Activated CD4-positive, alpha-beta T cell treated with anti-CD3 and anti-CD28 coated beads for 36 hours (primary cell): ENCODE measurements at regions of chr5 and their contacts with region 1.

Region 1: GRCh38 chr5:54243473-54244080 is 66.8 kb downstream of the ARL15 start:
- DNase-seq: peak; percentile 53
- ATAC-seq: no peak
- H3K4me3 Mint-ChIP-seq: no peak overlapping the region
- H3K27ac Mint-ChIP-seq: no peak overlapping the region
- H3K4me1 Mint-ChIP-seq: peaks cover 4% of the 10 kb centered on the region
- H3K27me3 Mint-ChIP-seq: no peaks in the 10 kb centered on the region

Region 2: GRCh38 chr5:54217826-54218503 is 25.6 kb before region 1 on chr5:
- CTCF ChIA-PET with region 1: no interaction called
- POLR2A ChIA-PET with region 1: no interaction called
- intact Hi-C with region 1: no loop called
- DNase-seq: peak; percentile 12
- ATAC-seq: no peak
- H3K4me3 Mint-ChIP-seq: no peak overlapping the region
- H3K27ac Mint-ChIP-seq: no peak overlapping the region
- H3K4me1 Mint-ChIP-seq: peaks cover 7% of the 10 kb centered on the region
- H3K27me3 Mint-ChIP-seq: no peaks in the 10 kb centered on the region

Region 3: DNA sequence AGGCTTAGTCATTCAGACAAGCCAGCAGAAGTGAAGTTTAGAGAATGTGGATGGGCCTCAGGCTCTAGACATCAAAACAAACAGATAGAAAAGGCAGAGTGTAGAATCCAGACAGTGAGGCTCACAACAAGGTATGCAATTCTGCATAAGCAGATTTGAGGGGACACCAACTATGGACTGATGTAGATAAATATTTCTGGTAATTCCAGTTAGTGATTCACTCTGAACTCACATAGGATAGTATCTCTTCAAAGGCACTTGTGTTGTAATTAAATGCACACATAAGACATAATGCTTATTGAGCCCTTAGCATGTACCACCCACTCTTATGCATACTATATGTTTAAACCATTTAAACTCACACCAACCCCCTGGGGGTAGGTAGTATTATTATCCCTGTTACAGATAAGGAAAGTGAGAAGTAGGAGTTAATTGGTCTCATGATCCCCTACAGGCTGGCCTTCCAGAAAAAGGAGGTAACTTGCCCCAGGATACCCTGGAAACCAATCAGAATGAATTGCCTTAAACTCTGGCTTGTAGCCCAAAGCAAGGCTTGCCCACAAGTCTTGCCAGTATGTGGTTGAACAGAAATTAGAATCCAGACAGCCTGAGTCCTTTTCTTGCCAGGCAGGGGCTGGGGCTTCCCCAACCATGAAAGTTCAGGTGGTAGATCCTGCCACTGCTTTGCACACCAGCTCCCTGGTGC is 172.5 kb after region 1 on chr5:
- CTCF ChIA-PET with region 1: interaction called, 18 read pairs
- POLR2A ChIA-PET with region 1: no interaction called
- intact Hi-C with region 1: loop called (anchors 1 to 2 kb)
- DNase-seq: no peak
- ATAC-seq: no peak
- H3K4me3 Mint-ChIP-seq: no peak overlapping the region
- H3K27ac Mint-ChIP-seq: no peak overlapping the region
- H3K4me1 Mint-ChIP-seq: no peaks in the 10 kb centered on the region
- H3K27me3 Mint-ChIP-seq: peaks cover 6% of the 10 kb centered on the region

Region 4: GRCh38 chr5:55096861-55097260 is 853.3 kb after region 1 on chr5:
- CTCF ChIA-PET with region 1: no interaction called
- POLR2A ChIA-PET with region 1: no interaction called
- intact Hi-C with region 1: loop called in 1 of 2 experiments (anchors 10 kb)
- DNase-seq: peak; percentile 15
- ATAC-seq: peak; percentile 16
- H3K4me3 Mint-ChIP-seq: no peak overlapping the region
- H3K27ac Mint-ChIP-seq: no peak overlapping the region
- H3K4me1 Mint-ChIP-seq: peaks cover 67% of the 10 kb centered on the region
- H3K27me3 Mint-ChIP-seq: peaks cover 10% of the 10 kb centered on the region

Region 5: DNA sequence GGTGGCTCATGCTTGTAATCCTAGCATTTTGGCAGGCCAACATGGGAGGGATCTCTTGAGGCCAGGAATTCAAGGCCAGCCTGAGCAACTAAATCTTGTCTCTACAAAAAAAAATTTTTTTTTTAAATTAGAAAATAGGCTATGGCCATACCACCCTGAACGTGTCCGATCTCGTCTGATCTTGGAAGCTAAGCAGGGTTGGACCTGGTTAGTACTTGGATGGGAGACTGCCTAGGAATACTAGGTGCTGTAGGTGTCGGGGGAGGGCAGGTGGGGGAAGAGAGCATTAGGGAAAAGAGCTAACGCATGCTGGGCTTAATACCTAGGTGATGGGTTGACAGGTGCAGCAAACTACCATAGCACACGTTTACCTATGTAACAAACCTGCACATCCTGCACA is 1533.8 kb after region 1 on chr5:
- CTCF ChIA-PET with region 1: no interaction called
- POLR2A ChIA-PET with region 1: no interaction called
- intact Hi-C with region 1: no loop called
- DNase-seq: no peak
- ATAC-seq: no peak
- H3K4me3 Mint-ChIP-seq: no peak overlapping the region
- H3K27ac Mint-ChIP-seq: no peak overlapping the region
- H3K4me1 Mint-ChIP-seq: no peaks in the 10 kb centered on the region
- H3K27me3 Mint-ChIP-seq: peaks cover 16% of the 10 kb centered on the region